Activated T-helper 1 cell treated with anti-CD3 and anti-CD28 coated beads, Interleukin-12 subunit alpha, Interleukin-12 subunit beta, Interleukin-2, Interleukin-4 antibody, amounts not matched to agents 30 ng/mL and 10 ng/mL and 1 ng/mL, durations not matched to agents 14 hours and 24 hours and 36 hours (primary cell): ENCODE measurements at regions of chr12 and their contacts with region 1.

Region 1: DNA sequence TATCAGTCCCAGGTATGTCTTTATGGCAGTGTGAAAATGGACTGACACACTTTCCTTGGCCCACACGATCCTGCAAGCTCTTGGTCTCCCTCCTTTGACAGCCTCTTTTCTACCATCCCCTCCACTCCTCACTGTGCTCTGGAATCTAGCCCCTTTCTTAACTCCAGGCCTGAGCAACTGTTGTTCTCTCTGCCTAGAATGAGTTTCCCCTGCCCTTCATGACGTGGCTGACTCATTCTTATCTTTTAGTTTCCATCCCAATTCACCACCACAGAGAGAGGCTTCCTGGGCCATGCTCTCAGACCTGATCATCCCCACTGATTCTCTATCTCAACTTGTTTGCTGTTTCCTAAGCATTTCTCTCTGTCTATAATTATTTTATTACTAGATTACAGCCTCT is 157.4 kb upstream of the HMGA2 start:
- DNase-seq: no peak
- H3K4me3 Mint-ChIP-seq: no peak overlapping the region
- H3K27ac Mint-ChIP-seq: peak overlapping the region; percentile 75
- H3K4me1 Mint-ChIP-seq: no peaks in the 10 kb centered on the region
- H3K27me3 Mint-ChIP-seq: no peaks in the 10 kb centered on the region

Region 2: DNA sequence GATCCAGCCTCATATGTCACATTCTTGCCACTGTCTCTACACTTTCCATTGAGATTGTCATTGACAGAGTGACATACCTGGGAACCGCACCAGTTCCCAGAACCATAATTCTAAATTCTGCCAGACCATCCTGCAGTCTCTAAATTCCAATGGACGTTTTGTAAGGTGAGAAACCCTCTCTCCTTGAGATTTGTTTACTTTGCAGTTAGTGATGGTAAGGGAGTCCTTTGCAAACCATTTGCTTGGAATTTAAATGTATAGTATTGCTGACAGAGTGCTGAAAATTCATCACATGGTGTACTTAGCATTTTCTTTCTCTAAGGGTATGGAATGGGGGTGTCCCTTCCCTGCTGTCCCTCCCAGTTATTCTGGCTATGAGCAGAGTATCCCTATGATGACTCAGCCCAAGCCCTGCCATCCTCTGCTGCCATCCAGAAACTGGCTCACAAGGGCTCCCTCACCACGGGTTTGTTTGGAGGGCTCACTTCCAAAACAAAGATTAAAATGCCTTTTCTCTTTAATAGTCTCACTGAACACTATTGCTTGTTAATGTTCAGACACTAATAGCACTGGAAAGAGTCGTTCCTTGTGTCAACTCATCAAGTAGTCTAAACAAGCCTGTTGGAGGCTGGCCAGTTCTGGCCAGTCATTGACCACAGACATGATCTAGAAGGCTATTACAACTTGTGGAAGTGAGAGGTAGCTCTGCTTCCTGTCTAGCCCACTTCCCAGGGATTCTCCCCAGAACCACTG is 28.4 kb after region 1 on chr12:
- intact Hi-C with region 1: no loop called
- DNase-seq: no peak
- H3K4me3 Mint-ChIP-seq: no peak overlapping the region
- H3K27ac Mint-ChIP-seq: no peak overlapping the region
- H3K4me1 Mint-ChIP-seq: no peaks in the 10 kb centered on the region
- H3K27me3 Mint-ChIP-seq: peaks cover 5% of the 10 kb centered on the region

Region 3: DNA sequence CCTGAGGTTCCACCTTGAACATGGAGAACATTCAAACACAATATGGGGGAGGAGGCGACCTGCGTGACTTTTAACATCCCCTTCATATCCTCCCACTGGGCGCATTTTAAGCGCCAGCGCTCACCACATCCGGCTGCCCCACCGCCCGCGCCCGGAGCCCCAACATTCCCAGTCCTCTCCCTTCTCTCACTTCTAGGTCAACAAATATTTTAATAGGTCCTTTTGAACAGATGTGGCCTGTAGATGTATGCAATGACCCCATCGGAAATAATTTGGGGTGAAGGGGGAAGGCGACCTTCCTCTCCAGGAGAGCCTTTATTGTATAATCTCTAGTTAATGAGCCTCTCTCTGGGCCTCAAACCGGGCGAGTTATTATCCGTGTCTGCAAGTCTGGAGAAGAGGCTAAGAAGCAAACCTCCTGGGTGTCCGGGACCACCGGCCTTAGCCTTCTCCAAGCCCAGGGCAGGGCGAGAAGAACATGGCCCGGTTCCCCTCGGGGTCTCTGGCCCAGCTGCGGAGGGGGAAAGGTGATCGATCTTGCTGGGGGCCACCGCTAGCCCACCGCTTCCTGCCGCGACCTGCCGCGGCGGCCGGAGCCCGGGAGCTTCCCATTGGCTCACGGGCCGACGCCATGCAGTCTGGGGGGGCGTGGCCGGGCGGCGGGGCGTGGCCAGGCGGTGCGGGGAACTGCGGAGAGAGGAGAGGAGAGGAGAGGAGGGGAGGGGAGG is 74.2 kb after region 1 on chr12:
- intact Hi-C with region 1: loop called (anchors 5 kb)
- DNase-seq: peak; percentile 41
- H3K4me3 Mint-ChIP-seq: peak overlapping the region; percentile 71
- H3K27ac Mint-ChIP-seq: no peak overlapping the region
- H3K4me1 Mint-ChIP-seq: peaks cover 10% of the 10 kb centered on the region
- H3K27me3 Mint-ChIP-seq: peaks cover 17% of the 10 kb centered on the region